Left ventricle myocardium inferior (tissue), 1 donor: ENCODE measurements at regions of chr4 and their contacts with region 1.

Region 1: GRCh38 chr4:109826719-109827118 is 1.1 kb upstream of the RRH start:
- DNase-seq: no peak
- H3K4me3 ChIP-seq: no peak overlapping the region
- H3K27ac ChIP-seq: no peak overlapping the region
- H3K4me1 ChIP-seq: no peaks in the 10 kb centered on the region
- H3K27me3 ChIP-seq: no peaks in the 10 kb centered on the region
- CTCF ChIP-seq: peak; percentile 68

Region 2: GRCh38 chr4:109429545-109429944 is 397.2 kb before region 1 on chr4:
- intact Hi-C with region 1: loop called (anchors 5 kb)
- DNase-seq: no peak
- H3K4me3 ChIP-seq: no peak overlapping the region
- H3K27ac ChIP-seq: no peak overlapping the region
- H3K4me1 ChIP-seq: peaks cover 22% of the 10 kb centered on the region
- H3K27me3 ChIP-seq: no peaks in the 10 kb centered on the region
- CTCF ChIP-seq: no peak